Esophagus muscularis mucosa (tissue), 4 donors: ENCODE measurements at regions of chr6 and their contacts with region 1.

Region 1: DNA sequence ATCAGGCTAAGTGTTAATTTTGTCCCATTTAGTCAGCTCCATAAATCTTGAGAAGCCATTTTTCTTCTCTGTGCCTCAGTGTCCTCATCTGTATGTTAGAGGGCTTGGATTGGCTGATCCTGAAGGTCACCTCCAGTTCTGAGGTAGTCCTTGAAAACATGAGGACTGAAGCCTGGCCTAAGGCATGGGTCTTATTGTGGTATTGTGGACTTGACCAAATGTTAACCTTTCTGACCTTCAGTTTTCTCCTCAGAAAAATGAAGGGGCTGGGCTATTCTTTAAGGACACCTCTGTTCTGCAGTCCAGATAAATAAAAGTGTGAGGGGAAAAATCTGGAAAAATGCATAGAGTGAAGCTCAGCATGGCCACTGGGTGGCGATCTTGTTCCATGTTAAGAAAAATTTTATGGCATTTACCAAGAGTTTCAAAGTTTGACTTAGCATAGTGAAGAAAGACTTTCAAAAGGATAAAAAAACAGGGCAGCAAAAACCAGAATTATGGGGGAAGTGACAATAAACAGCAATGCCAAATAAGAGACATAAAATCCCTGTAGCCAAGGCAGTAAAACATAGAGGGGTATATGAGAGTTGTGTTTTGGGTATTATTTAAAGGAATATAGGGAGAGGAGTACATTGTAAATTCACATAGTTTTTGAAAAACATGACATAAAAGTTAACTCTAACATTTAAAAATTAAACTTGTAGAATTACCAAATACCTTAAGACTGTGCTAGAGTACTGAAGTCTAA is 13.2 kb upstream of the TFB1M start:
- DNase-seq: no peak
- H3K4me3 ChIP-seq: no peak overlapping the region
- H3K27ac ChIP-seq: no peak overlapping the region
- H3K4me1 ChIP-seq: no peaks in the 10 kb centered on the region
- H3K27me3 ChIP-seq: no peaks in the 10 kb centered on the region
- CTCF ChIP-seq: peak; percentile 82 to 87 (median 87)
- EP300 ChIP-seq: no peak
- POLR2A ChIP-seq: no peak

Region 2: GRCh38 chr6:155493694-155494143 is 166.2 kb after region 1 on chr6:
- intact Hi-C with region 1: loop called (anchors 10 kb)
- DNase-seq: no peak
- H3K4me3 ChIP-seq: no peak overlapping the region
- H3K27ac ChIP-seq: peak overlapping the region; percentile 61 to 80 (median 72)
- H3K4me1 ChIP-seq: peaks cover 4 to 28% (median 26%) of the 10 kb centered on the region in 4 donors
- H3K27me3 ChIP-seq: no peaks in the 10 kb centered on the region
- CTCF ChIP-seq: no peak
- EP300 ChIP-seq: no peak
- POLR2A ChIP-seq: no peak

Region 3: GRCh38 chr6:155530219-155530834 is 202.8 kb after region 1 on chr6:
- intact Hi-C with region 1: loop called (anchors 1 kb)
- DNase-seq: no peak
- H3K4me3 ChIP-seq: no peak overlapping the region
- H3K27ac ChIP-seq: peak overlapping the region in 1 of 4 donors; percentile 12
- H3K4me1 ChIP-seq: peaks cover 10 to 20% (median 17%) of the 10 kb centered on the region in 4 donors
- H3K27me3 ChIP-seq: no peaks in the 10 kb centered on the region
- CTCF ChIP-seq: peak; percentile 68 to 78 (median 70)
- EP300 ChIP-seq: no peak
- POLR2A ChIP-seq: no peak